Psoas muscle (tissue), 8 donors: ENCODE measurements at regions of chr6 and their contacts with region 1.

Region 1: GRCh38 chr6:33425668-33426577 is 6.1 kb downstream of the SYNGAP1 start:
- DNase-seq: peak; percentile 88 to 93
- ATAC-seq: peak; percentile 82 to 88 (median 84)
- H3K4me3 ChIP-seq: peak overlapping the region; percentile 73
- H3K27ac ChIP-seq: peak overlapping the region; percentile 85
- H3K4me1 ChIP-seq: peaks cover 18% of the 10 kb centered on the region
- H3K27me3 ChIP-seq: no peaks in the 10 kb centered on the region
- CTCF ChIP-seq: peak; percentile 52

Region 2: GRCh38 chr6:33391278-33391921 is 34.5 kb before region 1 on chr6 and contains the start of gene KIFC1:
- intact Hi-C with region 1: loop called in 1 of 2 experiments (anchors 5 kb)
- DNase-seq: peak; percentile 99 to 100
- ATAC-seq: peak; percentile 95 to 98 (median 97)
- H3K4me3 ChIP-seq: peak within 1 kb of the TSS; percentile 73
- H3K27ac ChIP-seq: peak within 1 kb of the TSS; percentile 92
- H3K4me1 ChIP-seq: peaks cover 7% of the 10 kb centered on the region
- H3K27me3 ChIP-seq: no peaks in the 10 kb centered on the region
- CTCF ChIP-seq: peak; percentile 96
- total RNA-seq, gene KIFC1: 0.17 to 0.27 (median 0.25) TPM in 3 of 4 donors, not detected in the other